ENCODE measurements at regions of chr1 and their contacts with region 1.

Region 1: GRCh38 chr1:37595440-37596319 is at the start of gene GNL2:
- DNase-seq: peak; percentile 85 to 98
- H3K4me3 ChIP-seq: peak within 1 kb of the TSS; percentile 85
- H3K27ac ChIP-seq: peak within 1 kb of the TSS; percentile 3; the same call in 1 of the 2 replicates
- H3K4me1 ChIP-seq: peaks cover 14% of the 10 kb centered on the region
- H3K27me3 ChIP-seq: no peaks in the 10 kb centered on the region
- CTCF ChIP-seq: no peak
- total RNA-seq, gene GNL2: 51.3 and 51.9 TPM in 2 replicates

Region 2: DNA sequence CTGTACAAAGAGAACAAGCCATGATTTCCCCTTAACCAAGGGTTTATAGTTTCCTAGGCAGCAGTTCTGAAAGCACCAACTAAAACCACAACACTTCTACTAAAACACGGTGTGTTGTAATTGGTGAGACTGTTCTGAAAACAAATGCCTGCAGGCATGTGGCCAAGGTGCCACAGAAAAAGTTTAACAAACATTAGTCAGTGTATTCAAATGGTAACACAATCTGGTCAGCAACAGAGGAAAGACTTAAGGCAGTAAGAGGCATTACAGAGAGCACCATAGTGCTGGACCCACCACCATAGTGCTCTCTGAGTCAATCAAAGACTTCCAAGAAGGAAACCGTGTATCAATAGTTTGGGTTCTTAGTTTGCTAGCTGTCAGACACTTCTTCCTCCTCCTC is 58.3 kb before region 1 on chr1:
- CTCF ChIA-PET with region 1: no interaction called
- POLR2A ChIA-PET with region 1: no interaction called
- intact Hi-C with region 1: loop called (anchors 5 kb)
- DNase-seq: peak; percentile 51 to 87
- H3K4me3 ChIP-seq: no peak overlapping the region
- H3K27ac ChIP-seq: peak overlapping the region; percentile 40
- H3K4me1 ChIP-seq: peaks cover 48% of the 10 kb centered on the region
- H3K27me3 ChIP-seq: no peaks in the 10 kb centered on the region
- CTCF ChIP-seq: no peak

Region 3: GRCh38 chr1:37793773-37794371 is 198.2 kb after region 1 on chr1 and contains the start of gene MANEAL:
- CTCF ChIA-PET with region 1: interaction called, 20 read pairs
- POLR2A ChIA-PET with region 1: no interaction called
- intact Hi-C with region 1: no loop called
- DNase-seq: peak in 1 of 2 experiments; percentile 53
- H3K4me3 ChIP-seq: peak within 1 kb of the TSS; percentile 83
- H3K27ac ChIP-seq: no peak within 1 kb of the TSS
- H3K4me1 ChIP-seq: peaks cover 24% of the 10 kb centered on the region
- H3K27me3 ChIP-seq: no peaks in the 10 kb centered on the region
- CTCF ChIP-seq: no peak
- total RNA-seq, gene MANEAL: 11.3 and 13.1 TPM in 2 replicates

Region 4: GRCh38 chr1:37859507-37860345 is 264.0 kb after region 1 on chr1 and contains the start of gene MTF1:
- CTCF ChIA-PET with region 1: no interaction called
- POLR2A ChIA-PET with region 1: no interaction called
- intact Hi-C with region 1: loop called (anchors 5 kb)
- DNase-seq: peak; percentile 91 to 97
- H3K4me3 ChIP-seq: peak within 1 kb of the TSS; percentile 76
- H3K27ac ChIP-seq: peak within 1 kb of the TSS; percentile 91
- H3K4me1 ChIP-seq: peaks cover 31% of the 10 kb centered on the region
- H3K27me3 ChIP-seq: no peaks in the 10 kb centered on the region
- CTCF ChIP-seq: peak; percentile 92
- total RNA-seq, gene MTF1: 22.1 and 22.5 TPM in 2 replicates

Measured in PC-9 (cell line).